ENCODE measurements at regions of chr20 and their contacts with region 1.

Region 1: GRCh38 chr20:17904027-17904426 is 64.6 kb downstream of the SNX5 start:
- DNase-seq: no peak
- H3K4me3 ChIP-seq: no peak overlapping the region
- H3K27ac ChIP-seq: no peak overlapping the region
- H3K4me1 ChIP-seq: no peaks in the 10 kb centered on the region
- H3K27me3 ChIP-seq: no peaks in the 10 kb centered on the region
- CTCF ChIP-seq: no peak
- POLR2A ChIP-seq: no peak

Region 2: DNA sequence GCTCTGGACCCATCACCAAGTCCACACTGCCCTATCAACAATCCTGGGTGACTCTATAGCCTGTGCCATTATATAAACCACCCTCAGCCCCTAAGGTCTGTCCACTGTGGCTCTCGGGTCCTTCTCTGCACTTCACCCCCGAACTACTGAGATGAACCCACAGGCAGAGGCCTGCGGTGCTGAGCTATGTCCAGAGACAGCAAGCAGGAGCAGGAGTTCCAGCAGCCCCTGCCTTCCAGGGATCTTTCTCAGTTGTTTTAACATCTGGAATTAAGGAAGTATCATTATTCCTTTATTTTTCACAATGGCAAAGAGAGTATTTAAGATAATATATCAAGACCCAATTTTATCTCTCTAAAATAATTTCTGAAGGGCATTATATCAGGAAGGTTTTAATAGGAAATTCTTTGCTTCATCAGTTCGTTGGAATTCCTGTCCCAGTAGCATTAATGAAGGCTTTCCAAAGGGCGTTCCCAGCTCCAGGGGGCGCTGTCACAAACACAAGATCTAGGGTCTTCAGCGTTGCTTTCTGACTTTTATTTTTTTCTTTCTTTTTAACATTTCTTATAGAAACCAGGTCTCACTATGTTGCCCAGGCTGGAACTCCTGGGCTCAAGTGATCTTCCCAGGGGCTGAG is 249.3 kb before region 1 on chr20:
- intact Hi-C with region 1: loop called (anchors 10 kb)
- DNase-seq: peak; percentile 74 to 80
- H3K4me3 ChIP-seq: no peak overlapping the region
- H3K27ac ChIP-seq: peak overlapping the region; percentile 27 to 62 (median 45)
- H3K4me1 ChIP-seq: peaks cover 35 to 50% of the 10 kb centered on the region in 2 donors
- H3K27me3 ChIP-seq: no peaks in the 10 kb centered on the region
- CTCF ChIP-seq: peak in 5 of 6 experiments; percentile 38 to 65 (median 51)
- POLR2A ChIP-seq: no peak

Measured in thyroid gland (tissue), 4 donors.